ENCODE measurements at regions of chr7 and their contacts with region 1.

Region 1: GRCh38 chr7:24587848-24588247 is 14.6 kb downstream of the PALS2 start:
- DNase-seq: peak; percentile 25 to 80 (median 67)
- ATAC-seq: peak; percentile 95
- H3K4me3 ChIP-seq: no peak overlapping the region
- H3K4me3 Mint-ChIP-seq: no peak overlapping the region
- H3K27ac ChIP-seq: no peak overlapping the region
- H3K27ac Mint-ChIP-seq: no peak overlapping the region
- H3K4me1 ChIP-seq: no peaks in the 10 kb centered on the region
- H3K4me1 Mint-ChIP-seq: peaks cover 12% of the 10 kb centered on the region
- H3K27me3 ChIP-seq: no peaks in the 10 kb centered on the region
- H3K27me3 Mint-ChIP-seq: no peaks in the 10 kb centered on the region
- CTCF ChIP-seq: peak; percentile 97

Region 2: DNA sequence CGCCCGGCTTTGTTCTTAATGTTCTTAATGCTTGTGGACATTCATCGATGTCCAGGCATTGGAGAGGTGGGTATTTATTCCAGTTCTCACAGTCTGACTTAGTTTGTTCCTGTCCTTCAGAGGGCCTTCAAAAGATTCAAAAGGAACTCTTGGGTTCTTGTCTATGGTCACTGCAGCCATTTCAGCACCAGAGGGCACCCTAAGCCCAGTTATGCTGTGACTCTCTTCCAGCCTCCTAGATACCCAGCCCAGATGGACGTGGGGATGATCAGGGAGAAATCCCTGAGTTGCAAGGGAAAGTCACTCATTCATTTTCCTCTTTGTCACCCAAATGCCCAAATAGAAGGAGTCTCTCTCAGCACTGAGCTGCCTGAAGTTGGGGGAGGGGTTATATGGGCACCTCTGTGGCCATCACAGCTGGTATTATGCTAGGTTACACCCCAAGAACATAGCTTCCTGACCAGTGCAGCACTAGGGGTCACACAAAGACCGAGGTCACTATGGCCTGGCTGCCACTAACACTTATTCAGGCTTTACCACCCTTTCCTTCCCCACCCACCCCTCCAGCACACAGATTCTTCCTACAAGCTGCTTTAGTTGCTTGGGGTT is 1017.2 kb before region 1 on chr7:
- CTCF ChIA-PET with region 1: no interaction called
- POLR2A ChIA-PET with region 1: no interaction called
- intact Hi-C with region 1: loop called (anchors 2 kb)
- DNase-seq: peak; percentile 40 to 81 (median 66)
- ATAC-seq: peak; percentile 83
- H3K4me3 ChIP-seq: no peak overlapping the region
- H3K4me3 Mint-ChIP-seq: no peak overlapping the region
- H3K27ac ChIP-seq: no peak overlapping the region
- H3K27ac Mint-ChIP-seq: no peak overlapping the region
- H3K4me1 ChIP-seq: no peaks in the 10 kb centered on the region
- H3K4me1 Mint-ChIP-seq: no peaks in the 10 kb centered on the region
- H3K27me3 ChIP-seq: no peaks in the 10 kb centered on the region
- H3K27me3 Mint-ChIP-seq: peaks cover 16% of the 10 kb centered on the region
- CTCF ChIP-seq: peak; percentile 67

Region 3: DNA sequence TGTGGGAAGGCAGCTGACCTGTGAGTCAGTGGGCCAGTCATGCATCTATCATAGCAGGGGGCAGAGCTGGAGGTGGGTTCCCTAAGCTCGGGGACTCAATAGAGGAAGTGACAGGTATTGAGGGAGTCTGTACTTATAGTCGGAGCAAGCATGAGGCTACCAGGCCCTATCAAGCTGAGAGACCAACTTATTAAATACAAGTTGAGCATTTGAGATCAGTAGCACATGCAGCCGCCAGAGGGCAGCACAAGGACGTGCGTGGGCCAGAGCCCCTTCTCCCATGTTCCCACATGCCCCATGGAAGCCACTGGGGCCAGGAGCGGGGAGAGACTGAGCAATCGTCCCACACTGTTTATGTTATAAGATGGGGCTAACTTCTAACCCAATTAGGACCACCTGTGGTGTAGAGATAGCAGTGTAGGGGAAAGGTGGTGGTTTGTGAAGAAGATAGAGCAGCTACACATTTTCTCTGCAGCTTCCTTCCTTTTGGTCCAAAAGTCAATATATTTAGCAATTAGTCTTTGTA is 890.9 kb before region 1 on chr7:
- CTCF ChIA-PET with region 1: no interaction called
- POLR2A ChIA-PET with region 1: no interaction called
- intact Hi-C with region 1: loop called in 1 of 2 experiments (anchors 5 kb)
- DNase-seq: peak in 8 of 9 experiments; percentile 28 to 71 (median 60)
- ATAC-seq: peak; percentile 65
- H3K4me3 ChIP-seq: no peak overlapping the region
- H3K4me3 Mint-ChIP-seq: no peak overlapping the region
- H3K27ac ChIP-seq: no peak overlapping the region
- H3K27ac Mint-ChIP-seq: no peak overlapping the region
- H3K4me1 ChIP-seq: no peaks in the 10 kb centered on the region
- H3K4me1 Mint-ChIP-seq: no peaks in the 10 kb centered on the region
- H3K27me3 ChIP-seq: no peaks in the 10 kb centered on the region
- H3K27me3 Mint-ChIP-seq: no peaks in the 10 kb centered on the region
- CTCF ChIP-seq: peak; percentile 64

Region 4: DNA sequence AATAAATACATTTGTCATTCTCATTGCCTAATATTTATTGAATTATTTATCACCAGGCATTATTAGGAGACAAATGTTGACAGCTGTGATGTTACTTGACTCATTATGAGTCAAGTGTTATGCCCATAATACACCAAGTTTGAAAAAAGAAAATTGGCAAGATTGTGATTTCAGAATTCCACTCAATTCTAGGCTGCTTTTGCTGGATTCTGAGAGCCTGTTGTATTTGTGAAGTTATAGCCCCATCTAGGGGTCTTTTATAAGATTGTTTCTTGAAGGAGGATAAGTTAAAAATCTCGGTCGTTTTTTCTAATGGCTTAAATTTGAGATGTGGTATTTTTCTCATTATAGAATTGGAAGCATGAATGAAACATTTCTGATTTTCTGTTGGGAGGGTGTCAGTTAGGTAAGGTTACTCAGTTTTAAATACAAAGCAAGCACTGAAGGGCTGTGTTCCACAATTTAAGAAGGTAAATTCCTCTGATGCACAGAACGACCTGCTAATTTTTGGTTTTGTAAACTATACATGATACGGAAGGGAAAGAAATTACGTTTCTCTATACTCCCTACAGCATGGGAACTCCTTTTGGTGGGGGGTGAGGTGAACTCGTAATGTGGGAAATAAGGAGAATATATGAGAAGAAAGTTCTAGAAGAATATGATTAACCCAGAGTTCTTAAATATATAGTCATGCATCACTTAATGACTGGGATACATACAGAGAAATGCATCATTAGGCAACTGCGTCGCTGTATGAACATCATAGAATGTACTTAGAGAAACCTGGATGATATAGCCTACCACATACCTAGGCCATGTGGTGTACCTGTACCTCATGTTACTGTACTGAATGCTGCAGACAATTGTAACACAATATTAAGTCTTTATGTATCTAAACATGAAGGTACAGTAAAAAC is 875.2 kb before region 1 on chr7:
- CTCF ChIA-PET with region 1: no interaction called
- POLR2A ChIA-PET with region 1: no interaction called
- intact Hi-C with region 1: loop called in 1 of 2 experiments (anchors 5 kb)
- DNase-seq: peak in 2 of 9 experiments; percentile 59 to 68
- ATAC-seq: no peak
- H3K4me3 ChIP-seq: no peak overlapping the region
- H3K4me3 Mint-ChIP-seq: no peak overlapping the region
- H3K27ac ChIP-seq: no peak overlapping the region
- H3K27ac Mint-ChIP-seq: no peak overlapping the region
- H3K4me1 ChIP-seq: no peaks in the 10 kb centered on the region
- H3K4me1 Mint-ChIP-seq: no peaks in the 10 kb centered on the region
- H3K27me3 ChIP-seq: no peaks in the 10 kb centered on the region
- H3K27me3 Mint-ChIP-seq: no peaks in the 10 kb centered on the region
- CTCF ChIP-seq: peak; percentile 74

Region 5: GRCh38 chr7:23863209-23863798 is 724.5 kb before region 1 on chr7:
- CTCF ChIA-PET with region 1: no interaction called
- POLR2A ChIA-PET with region 1: no interaction called
- intact Hi-C with region 1: loop called in 1 of 2 experiments (anchors 5 kb)
- DNase-seq: peak in 2 of 9 experiments; percentile 41 to 51
- ATAC-seq: no peak
- H3K4me3 ChIP-seq: no peak overlapping the region
- H3K4me3 Mint-ChIP-seq: no peak overlapping the region
- H3K27ac ChIP-seq: no peak overlapping the region
- H3K27ac Mint-ChIP-seq: no peak overlapping the region
- H3K4me1 ChIP-seq: no peaks in the 10 kb centered on the region
- H3K4me1 Mint-ChIP-seq: no peaks in the 10 kb centered on the region
- H3K27me3 ChIP-seq: no peaks in the 10 kb centered on the region
- H3K27me3 Mint-ChIP-seq: peaks cover 2% of the 10 kb centered on the region
- CTCF ChIP-seq: peak; percentile 28

Region 6: DNA sequence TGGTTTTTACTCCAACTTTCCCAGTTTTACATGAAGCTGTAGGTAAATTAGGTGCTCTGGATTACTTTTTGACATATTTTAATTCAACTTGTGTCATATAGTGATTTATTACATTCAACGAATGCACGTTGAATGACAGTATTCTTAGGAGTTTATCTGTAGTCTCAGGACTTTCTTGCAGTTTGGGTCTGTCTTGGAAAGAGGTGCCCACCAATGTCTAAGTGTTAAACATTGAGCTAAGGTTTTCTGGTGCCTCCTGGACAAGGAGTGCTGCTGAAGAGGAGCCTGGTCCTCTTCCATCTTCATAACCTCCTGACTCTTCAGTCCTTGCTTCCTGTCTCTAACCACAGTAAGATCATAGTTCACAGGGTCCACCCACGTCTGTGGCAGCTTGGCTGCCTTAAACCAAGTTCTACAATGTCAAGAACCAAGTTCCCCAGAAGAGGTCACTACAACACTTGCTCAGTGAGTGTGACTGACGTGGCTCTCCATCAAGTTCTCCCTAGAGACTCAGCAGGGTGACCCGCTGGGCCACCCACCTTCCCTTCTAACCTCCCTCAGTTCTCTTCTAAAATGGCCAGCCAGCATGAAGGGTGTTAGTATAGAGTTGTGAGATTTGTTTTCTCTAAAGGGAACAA is 297.7 kb before region 1 on chr7:
- CTCF ChIA-PET with region 1: no interaction called
- POLR2A ChIA-PET with region 1: no interaction called
- intact Hi-C with region 1: loop called in 1 of 2 experiments (anchors 2 kb)
- DNase-seq: peak in 3 of 9 experiments; percentile 18 to 65 (median 60)
- ATAC-seq: peak; percentile 58
- H3K4me3 ChIP-seq: no peak overlapping the region
- H3K4me3 Mint-ChIP-seq: no peak overlapping the region
- H3K27ac ChIP-seq: no peak overlapping the region
- H3K27ac Mint-ChIP-seq: no peak overlapping the region
- H3K4me1 ChIP-seq: peaks cover 5% of the 10 kb centered on the region
- H3K4me1 Mint-ChIP-seq: peaks cover 8% of the 10 kb centered on the region
- H3K27me3 ChIP-seq: peaks cover 2 to 11% of the 10 kb centered on the region in 2 experiments
- H3K27me3 Mint-ChIP-seq: peaks cover 38% of the 10 kb centered on the region
- CTCF ChIP-seq: no peak

Region 7: DNA sequence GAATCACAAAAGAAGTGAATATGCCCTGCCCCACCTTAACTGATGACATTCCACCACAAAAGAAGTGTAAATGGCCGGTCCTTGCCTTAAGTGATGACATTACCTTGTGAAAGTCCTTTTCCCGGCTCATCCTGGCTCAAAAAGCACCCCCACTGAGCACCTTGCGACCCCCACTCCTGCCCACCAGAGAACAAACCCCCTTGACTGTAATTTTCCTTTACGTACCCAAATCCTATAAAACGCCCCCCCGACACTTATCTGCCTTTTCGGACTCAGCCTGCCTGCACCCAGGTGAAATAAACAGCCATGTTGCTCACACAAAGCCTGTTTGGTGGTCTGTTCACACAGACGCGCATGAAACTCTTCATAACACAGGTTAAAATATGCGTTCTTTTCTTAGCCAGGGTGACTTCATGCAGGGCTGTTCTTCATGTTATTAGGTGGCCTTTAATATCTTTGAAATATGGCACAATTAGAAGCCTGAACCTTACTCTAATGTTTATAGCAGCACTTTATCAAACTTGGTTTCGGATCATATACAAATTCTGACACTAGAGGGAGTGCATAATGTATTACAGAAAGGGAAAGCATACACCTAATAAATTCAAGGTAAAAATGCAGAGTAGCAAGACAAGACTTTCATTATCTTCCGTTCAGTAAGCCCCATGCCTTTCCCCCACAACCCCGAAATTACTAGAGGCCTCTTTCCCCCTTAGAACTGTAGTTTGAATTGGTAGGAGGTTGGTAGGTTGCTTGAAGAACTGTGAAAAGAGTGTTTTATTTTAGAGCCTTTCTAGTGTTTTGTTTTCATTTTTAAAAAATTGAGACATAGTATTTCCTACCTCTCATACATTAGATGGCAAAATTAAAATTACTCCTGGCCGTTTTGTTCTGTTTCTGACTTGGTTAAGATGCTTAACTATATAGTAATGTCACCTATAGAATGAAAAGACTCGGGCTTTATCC is 185.9 kb before region 1 on chr7:
- CTCF ChIA-PET with region 1: interaction called, 7 read pairs
- POLR2A ChIA-PET with region 1: no interaction called
- intact Hi-C with region 1: loop called in 1 of 2 experiments (anchors 1 kb)
- DNase-seq: peak in 2 of 9 experiments; percentile 30 to 47
- ATAC-seq: peak; percentile 48
- H3K4me3 ChIP-seq: no peak overlapping the region
- H3K4me3 Mint-ChIP-seq: no peak overlapping the region
- H3K27ac ChIP-seq: no peak overlapping the region
- H3K27ac Mint-ChIP-seq: no peak overlapping the region
- H3K4me1 ChIP-seq: no peaks in the 10 kb centered on the region
- H3K4me1 Mint-ChIP-seq: peaks cover 16% of the 10 kb centered on the region
- H3K27me3 ChIP-seq: no peaks in the 10 kb centered on the region
- H3K27me3 Mint-ChIP-seq: peaks cover 2% of the 10 kb centered on the region
- CTCF ChIP-seq: peak; percentile 41